ENCODE measurements at regions of chr1 and their contacts with region 1.

Region 1: DNA sequence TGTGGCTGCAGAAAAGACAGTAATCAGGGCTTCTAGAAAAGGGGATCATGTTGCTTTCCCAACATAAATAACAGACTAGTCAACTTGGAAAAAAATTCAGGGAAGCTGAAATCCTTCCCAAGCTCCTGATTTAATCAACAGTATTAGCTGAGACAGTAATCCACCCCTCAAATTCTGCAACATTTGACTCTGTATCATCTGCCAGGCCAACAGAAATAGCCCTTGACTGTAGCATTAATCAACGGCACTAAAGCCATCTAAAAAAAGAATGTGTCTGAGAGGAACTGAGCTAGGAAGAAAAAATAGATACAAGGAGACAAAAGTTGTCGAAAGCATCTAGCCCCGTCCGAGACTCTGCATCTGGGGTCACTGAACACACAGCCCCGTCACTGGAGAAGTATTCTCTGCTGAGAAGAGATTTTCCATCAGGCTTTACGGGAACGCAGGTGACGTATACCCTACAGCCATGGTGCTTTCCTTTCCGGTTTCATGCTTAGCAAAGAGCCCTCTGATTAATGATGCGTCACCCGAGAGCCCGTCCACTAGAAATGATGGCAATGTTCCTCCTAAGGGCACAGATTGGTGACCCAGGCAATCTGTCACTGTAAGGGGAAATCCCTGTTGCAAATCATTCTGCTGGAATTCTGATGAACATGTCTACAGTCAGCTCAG is 42.1 kb upstream of the TP53BP2 start:
- DNase-seq: no peak
- ATAC-seq: peak; percentile 64

Region 2: GRCh38 chr1:223815865-223816264 is 72.0 kb before region 1 on chr1:
- intact Hi-C with region 1: no loop called
- DNase-seq: no peak
- ATAC-seq: no peak

Region 3: DNA sequence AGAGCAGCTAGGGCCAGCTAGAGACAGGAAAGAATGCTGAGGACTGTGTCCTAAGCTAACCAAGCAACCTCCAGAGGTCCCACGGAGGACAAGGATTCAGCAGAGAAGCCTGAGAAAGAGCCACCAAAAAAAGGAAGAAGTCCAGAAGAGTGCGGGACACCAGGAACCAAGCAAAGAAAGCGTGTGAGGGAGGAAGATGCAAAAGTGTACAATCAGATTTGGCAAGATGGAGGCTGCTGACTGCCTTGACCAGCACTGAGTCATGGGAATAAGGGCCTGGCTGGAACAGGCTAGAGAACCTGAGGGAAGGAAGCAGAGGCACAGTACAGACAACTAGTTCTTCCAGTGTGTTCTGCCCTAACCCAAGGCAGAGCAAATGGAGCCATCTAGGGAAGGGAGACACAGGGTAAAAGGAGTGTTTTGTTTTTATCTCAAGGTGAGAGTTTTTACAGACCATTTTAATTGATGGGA is 60.7 kb before region 1 on chr1:
- intact Hi-C with region 1: loop called (anchors 5 kb)
- DNase-seq: no peak
- ATAC-seq: no peak